Heart right ventricle (tissue), 16 donors: ENCODE measurements at regions of chrX and their contacts with region 1.

Region 1: DNA sequence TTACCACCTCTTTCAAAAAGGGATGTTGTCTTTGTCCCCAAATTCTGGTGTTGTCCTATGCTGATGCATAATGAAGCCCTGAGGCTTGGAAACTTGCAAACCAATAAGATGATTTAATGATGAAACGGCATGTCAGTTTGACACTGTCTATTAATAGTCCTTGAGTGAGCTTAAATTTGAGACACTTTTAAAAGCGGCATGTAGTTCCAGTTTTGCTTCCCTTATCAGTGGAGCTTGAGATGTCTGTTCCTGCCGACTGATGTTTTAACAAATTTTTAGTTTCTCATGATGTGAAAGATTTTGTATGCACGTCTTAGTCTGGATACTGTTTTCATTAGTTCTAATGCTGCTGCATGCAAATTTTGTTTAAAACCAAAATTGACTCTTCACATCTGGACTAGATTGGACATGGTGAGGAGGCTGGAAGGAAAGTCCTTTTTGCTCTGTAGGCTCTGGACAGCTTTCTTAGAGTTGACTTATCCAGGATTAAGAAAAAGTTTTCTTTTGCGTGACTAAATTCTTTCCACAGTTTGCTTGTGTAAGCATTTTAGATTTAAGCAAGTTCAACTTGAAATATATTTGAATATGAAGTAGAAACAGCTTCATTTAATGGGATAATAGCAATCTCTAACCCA is 11.7 kb downstream of the C1GALT1C1 start:
- DNase-seq: no peak
- ATAC-seq: no peak
- H3K4me3 ChIP-seq: no peak overlapping the region
- H3K27ac ChIP-seq: no peak overlapping the region
- H3K4me1 ChIP-seq: no peaks in the 10 kb centered on the region
- H3K27me3 ChIP-seq: peaks cover 0 to 7% (median 0%) of the 10 kb centered on the region in 7 donors
- CTCF ChIP-seq: no peak

Region 2: GRCh38 chrX:119852382-119853353 is 765.4 kb before region 1 on chrX and contains the start of gene UPF3B:
- intact Hi-C with region 1: no loop called
- DNase-seq: peak; percentile 92 to 95
- ATAC-seq: peak; percentile 97 to 99 (median 99)
- H3K4me3 ChIP-seq: peak within 1 kb of the TSS; percentile 47 to 83 (median 70)
- H3K27ac ChIP-seq: peak within 1 kb of the TSS; percentile 44 to 96 (median 89)
- H3K4me1 ChIP-seq: peaks cover 0 to 14% (median 6%) of the 10 kb centered on the region in 9 donors
- H3K27me3 ChIP-seq: peaks cover 0 to 6% (median 0%) of the 10 kb centered on the region in 7 donors
- CTCF ChIP-seq: peak in 1 of 9 donors; percentile 6
- total RNA-seq, gene UPF3B: 2.4 to 3.8 (median 2.9) TPM

Region 3: DNA sequence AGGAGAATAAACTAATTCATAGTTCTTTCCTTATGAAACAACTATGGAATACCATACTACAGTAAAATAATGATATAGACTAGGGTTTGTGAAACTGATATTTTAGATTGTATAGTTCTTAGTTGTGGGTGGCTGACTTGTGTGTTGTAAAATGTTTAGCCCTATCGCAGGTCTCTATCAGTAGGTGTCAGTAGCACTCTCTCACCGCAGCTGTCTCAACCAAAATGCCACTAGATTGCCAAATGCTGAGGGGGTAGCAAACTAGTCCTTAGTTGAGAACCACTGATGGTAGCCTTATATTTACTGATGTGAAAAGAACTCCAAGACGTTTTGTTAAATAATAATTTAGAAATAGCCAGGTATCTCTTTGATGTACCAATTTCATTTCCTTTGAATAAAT is 588.8 kb before region 1 on chrX:
- intact Hi-C with region 1: no loop called
- DNase-seq: no peak
- ATAC-seq: no peak
- H3K4me3 ChIP-seq: no peak overlapping the region
- H3K27ac ChIP-seq: no peak overlapping the region
- H3K4me1 ChIP-seq: no peaks in the 10 kb centered on the region
- H3K27me3 ChIP-seq: peaks cover 0 to 33% (median 0%) of the 10 kb centered on the region in 7 donors
- CTCF ChIP-seq: no peak

Region 4: DNA sequence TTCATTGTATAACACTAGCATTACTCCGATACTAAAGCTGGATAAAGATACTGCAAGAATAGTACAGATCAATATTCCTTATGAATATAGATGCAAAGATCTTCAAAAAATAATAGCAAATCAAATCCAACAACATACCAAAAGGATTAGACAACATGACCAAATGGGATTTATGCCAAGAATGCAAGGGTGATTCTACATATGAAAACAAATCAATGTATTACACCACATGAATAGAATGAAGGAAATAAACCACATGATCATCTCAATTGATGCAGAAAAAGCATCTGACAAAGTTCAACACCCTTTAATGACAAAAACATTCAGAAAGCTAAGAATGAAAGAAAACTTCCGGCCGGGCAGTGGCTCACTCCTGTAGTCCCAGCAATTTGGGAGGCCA is 100.2 kb before region 1 on chrX:
- intact Hi-C with region 1: no loop called
- DNase-seq: no peak
- ATAC-seq: no peak
- H3K4me3 ChIP-seq: no peak overlapping the region
- H3K27ac ChIP-seq: no peak overlapping the region
- H3K4me1 ChIP-seq: no peaks in the 10 kb centered on the region
- H3K27me3 ChIP-seq: peaks cover 0 to 3% (median 0%) of the 10 kb centered on the region in 7 donors
- CTCF ChIP-seq: no peak

Region 5: GRCh38 chrX:120549483-120550452 is 68.3 kb before region 1 on chrX:
- intact Hi-C with region 1: loop called in 1 of 10 experiments (anchors 10 kb)
- DNase-seq: no peak
- ATAC-seq: peak in 1 of 8 donors; percentile 68
- H3K4me3 ChIP-seq: no peak overlapping the region
- H3K27ac ChIP-seq: peak overlapping the region in 2 of 10 donors; percentile 13 to 46
- H3K4me1 ChIP-seq: peaks cover 0 to 2% (median 0%) of the 10 kb centered on the region in 9 donors
- H3K27me3 ChIP-seq: no peaks in the 10 kb centered on the region
- CTCF ChIP-seq: no peak

Region 6: GRCh38 chrX:120718969-120719368 is 100.9 kb after region 1 on chrX:
- intact Hi-C with region 1: no loop called
- DNase-seq: no peak
- ATAC-seq: no peak
- H3K4me3 ChIP-seq: no peak overlapping the region
- H3K27ac ChIP-seq: no peak overlapping the region
- H3K4me1 ChIP-seq: no peaks in the 10 kb centered on the region
- H3K27me3 ChIP-seq: no peaks in the 10 kb centered on the region
- CTCF ChIP-seq: no peak